Activated naive CD4-positive, alpha-beta T cell treated with anti-CD3 and anti-CD28 coated beads for 36 hours (primary cell): ENCODE measurements at regions of chr17 and their contacts with region 1.

Region 1: GRCh38 chr17:78589885-78590284 is 12.7 kb upstream of the DNAH17 start:
- DNase-seq: no peak
- H3K4me3 Mint-ChIP-seq: no peak overlapping the region
- H3K27ac Mint-ChIP-seq: no peak overlapping the region
- H3K4me1 Mint-ChIP-seq: peaks cover 9% of the 10 kb centered on the region
- H3K27me3 Mint-ChIP-seq: no peaks in the 10 kb centered on the region

Region 2: DNA sequence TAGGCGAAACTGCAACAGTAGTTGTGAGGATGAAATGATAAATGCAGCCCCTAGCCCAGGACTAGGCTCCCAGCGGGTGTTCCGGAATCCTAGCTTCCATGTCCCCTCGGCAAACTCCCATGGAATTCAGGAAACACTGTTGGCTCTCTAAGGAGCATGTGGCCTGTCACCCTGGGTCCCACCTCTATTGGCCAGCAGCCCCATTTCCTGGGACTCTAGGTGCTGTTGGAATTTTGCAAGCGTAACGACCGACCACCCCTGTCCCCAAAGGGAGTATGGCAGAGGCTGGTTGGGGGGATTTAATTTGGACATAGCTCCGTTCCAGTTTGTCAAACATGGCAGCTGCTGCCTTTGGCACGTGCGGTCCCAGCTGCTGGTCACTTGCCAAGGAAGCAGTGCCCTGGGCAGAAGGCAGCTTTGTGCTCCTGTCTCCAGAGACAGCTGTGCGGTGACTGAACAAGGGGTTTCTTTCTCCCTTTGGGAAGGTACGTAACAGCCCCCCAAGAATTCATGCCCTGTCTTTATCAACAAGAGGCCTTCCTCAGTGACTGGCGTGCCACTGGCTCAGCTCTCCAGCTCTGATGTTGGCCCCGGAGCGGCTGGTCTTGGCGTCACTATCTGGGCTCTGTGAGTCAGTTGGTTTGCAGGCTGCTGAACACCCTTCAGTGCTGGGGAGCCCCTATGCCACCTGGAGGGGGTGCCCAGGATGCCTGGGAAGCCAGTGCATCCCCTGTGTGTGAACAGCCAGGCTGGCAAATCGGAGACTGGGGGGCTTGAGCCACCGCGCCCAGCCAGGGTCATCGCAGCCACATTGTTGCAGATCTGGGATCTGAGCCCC is 866.6 kb before region 1 on chr17:
- CTCF ChIA-PET with region 1: no interaction called
- intact Hi-C with region 1: no loop called
- DNase-seq: no peak
- H3K4me3 Mint-ChIP-seq: no peak overlapping the region
- H3K27ac Mint-ChIP-seq: no peak overlapping the region
- H3K4me1 Mint-ChIP-seq: peaks cover 2% of the 10 kb centered on the region
- H3K27me3 Mint-ChIP-seq: no peaks in the 10 kb centered on the region

Region 3: GRCh38 chr17:78573956-78574355 is 15.9 kb before region 1 on chr17:
- CTCF ChIA-PET with region 1: no interaction called
- intact Hi-C with region 1: no loop called
- DNase-seq: no peak
- H3K4me3 Mint-ChIP-seq: no peak overlapping the region
- H3K27ac Mint-ChIP-seq: no peak overlapping the region
- H3K4me1 Mint-ChIP-seq: no peaks in the 10 kb centered on the region
- H3K27me3 Mint-ChIP-seq: no peaks in the 10 kb centered on the region

Region 4: GRCh38 chr17:78611607-78612006 is 21.7 kb after region 1 on chr17:
- CTCF ChIA-PET with region 1: no interaction called
- intact Hi-C with region 1: no loop called
- DNase-seq: no peak
- H3K4me3 Mint-ChIP-seq: no peak overlapping the region
- H3K27ac Mint-ChIP-seq: no peak overlapping the region
- H3K4me1 Mint-ChIP-seq: no peaks in the 10 kb centered on the region
- H3K27me3 Mint-ChIP-seq: no peaks in the 10 kb centered on the region

Region 5: GRCh38 chr17:78645421-78646295 is 55.8 kb after region 1 on chr17:
- CTCF ChIA-PET with region 1: no interaction called
- intact Hi-C with region 1: loop called (anchors 5 kb)
- DNase-seq: peak; percentile 90
- H3K4me3 Mint-ChIP-seq: peak overlapping the region; percentile 64
- H3K27ac Mint-ChIP-seq: peak overlapping the region; percentile 82
- H3K4me1 Mint-ChIP-seq: peaks cover 12% of the 10 kb centered on the region
- H3K27me3 Mint-ChIP-seq: no peaks in the 10 kb centered on the region

Region 6: GRCh38 chr17:78665952-78666920 is 76.4 kb after region 1 on chr17:
- CTCF ChIA-PET with region 1: no interaction called
- intact Hi-C with region 1: loop called (anchors 5 kb)
- DNase-seq: peak; percentile 91
- H3K4me3 Mint-ChIP-seq: no peak overlapping the region
- H3K27ac Mint-ChIP-seq: peak overlapping the region; percentile 78
- H3K4me1 Mint-ChIP-seq: peaks cover 21% of the 10 kb centered on the region
- H3K27me3 Mint-ChIP-seq: no peaks in the 10 kb centered on the region